CD8-positive, alpha-beta T cell (primary cell): ENCODE measurements at regions of chr22 and their contacts with region 1.

Region 1: GRCh38 chr22:26364066-26365015 is 64.7 kb upstream of the ASPHD2 start:
- DNase-seq: peak; percentile 1 to 78 (median 50)
- ATAC-seq: peak; percentile 73
- H3K4me3 ChIP-seq: no peak overlapping the region
- H3K4me3 Mint-ChIP-seq: no peak overlapping the region
- H3K27ac ChIP-seq: no peak overlapping the region
- H3K27ac Mint-ChIP-seq: no peak overlapping the region
- H3K4me1 ChIP-seq: peaks cover 7% of the 10 kb centered on the region
- H3K4me1 Mint-ChIP-seq: peaks cover 8% of the 10 kb centered on the region
- H3K27me3 ChIP-seq: peaks cover 0 to 4% of the 10 kb centered on the region in 2 experiments
- H3K27me3 Mint-ChIP-seq: peaks cover 20% of the 10 kb centered on the region
- CTCF ChIP-seq: peak; percentile 58

Region 2: DNA sequence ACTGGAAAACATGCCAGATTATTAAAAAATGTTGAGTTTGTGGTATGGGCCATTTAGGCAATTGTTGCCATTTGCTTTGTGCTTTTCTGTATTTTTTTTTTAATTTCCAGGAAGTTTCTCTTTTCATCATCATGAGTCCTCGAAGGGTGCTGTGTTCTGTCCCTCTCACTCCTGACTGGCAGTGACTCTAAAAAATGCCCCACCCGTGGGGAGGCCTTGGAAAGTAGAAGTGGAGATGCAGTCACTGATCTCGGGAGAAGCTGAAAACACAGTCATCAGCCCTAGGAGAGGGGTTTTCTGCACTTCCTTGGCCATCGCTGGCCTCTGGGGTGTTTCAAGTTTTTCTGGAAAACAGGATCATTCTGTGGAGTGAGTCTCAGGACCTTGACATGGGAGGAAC is 898.4 kb before region 1 on chr22:
- CTCF ChIA-PET with region 1: interaction called, 3 read pairs
- POLR2A ChIA-PET with region 1: no interaction called
- intact Hi-C with region 1: loop called in 1 of 2 experiments (anchors 1 kb)
- DNase-seq: no peak
- ATAC-seq: no peak
- H3K4me3 ChIP-seq: no peak overlapping the region
- H3K4me3 Mint-ChIP-seq: no peak overlapping the region
- H3K27ac ChIP-seq: no peak overlapping the region
- H3K27ac Mint-ChIP-seq: no peak overlapping the region
- H3K4me1 ChIP-seq: no peaks in the 10 kb centered on the region
- H3K4me1 Mint-ChIP-seq: peaks cover 2% of the 10 kb centered on the region
- H3K27me3 ChIP-seq: no peaks in the 10 kb centered on the region
- H3K27me3 Mint-ChIP-seq: no peaks in the 10 kb centered on the region
- CTCF ChIP-seq: no peak

Region 3: GRCh38 chr22:26391623-26392022 is 27.3 kb after region 1 on chr22:
- CTCF ChIA-PET with region 1: interaction called, 14 read pairs
- POLR2A ChIA-PET with region 1: no interaction called
- intact Hi-C with region 1: no loop called
- DNase-seq: no peak
- ATAC-seq: no peak
- H3K4me3 ChIP-seq: no peak overlapping the region
- H3K4me3 Mint-ChIP-seq: no peak overlapping the region
- H3K27ac ChIP-seq: no peak overlapping the region
- H3K27ac Mint-ChIP-seq: no peak overlapping the region
- H3K4me1 ChIP-seq: no peaks in the 10 kb centered on the region
- H3K4me1 Mint-ChIP-seq: no peaks in the 10 kb centered on the region
- H3K27me3 ChIP-seq: no peaks in the 10 kb centered on the region
- H3K27me3 Mint-ChIP-seq: peaks cover 18% of the 10 kb centered on the region
- CTCF ChIP-seq: no peak

Region 4: GRCh38 chr22:26656891-26657851 is 292.8 kb after region 1 on chr22 and contains the start of gene MIAT:
- CTCF ChIA-PET with region 1: no interaction called
- POLR2A ChIA-PET with region 1: no interaction called
- intact Hi-C with region 1: no loop called
- DNase-seq: peak; percentile 48 to 88 (median 78)
- ATAC-seq: peak; percentile 83
- H3K4me3 ChIP-seq: peak within 1 kb of the TSS; percentile 91 to 96
- H3K4me3 Mint-ChIP-seq: peak within 1 kb of the TSS; percentile 91
- H3K27ac ChIP-seq: peak within 1 kb of the TSS; percentile 38 to 57
- H3K27ac Mint-ChIP-seq: peak within 1 kb of the TSS; percentile 91
- H3K4me1 ChIP-seq: peaks cover 20% of the 10 kb centered on the region
- H3K4me1 Mint-ChIP-seq: peaks cover 28% of the 10 kb centered on the region
- H3K27me3 ChIP-seq: no peaks in the 10 kb centered on the region
- H3K27me3 Mint-ChIP-seq: no peaks in the 10 kb centered on the region
- CTCF ChIP-seq: no peak
- total RNA-seq, gene MIAT: 80.9 to 81.6 TPM

Region 5: GRCh38 chr22:27786291-27786932 is 1422.1 kb after region 1 on chr22:
- CTCF ChIA-PET with region 1: no interaction called
- POLR2A ChIA-PET with region 1: no interaction called
- intact Hi-C with region 1: loop called in 1 of 2 experiments (anchors 5 kb)
- DNase-seq: no peak
- ATAC-seq: no peak
- H3K4me3 ChIP-seq: no peak overlapping the region
- H3K4me3 Mint-ChIP-seq: no peak overlapping the region
- H3K27ac ChIP-seq: no peak overlapping the region
- H3K27ac Mint-ChIP-seq: no peak overlapping the region
- H3K4me1 ChIP-seq: no peaks in the 10 kb centered on the region
- H3K4me1 Mint-ChIP-seq: peaks cover 1% of the 10 kb centered on the region
- H3K27me3 ChIP-seq: no peaks in the 10 kb centered on the region
- H3K27me3 Mint-ChIP-seq: peaks cover 27% of the 10 kb centered on the region
- CTCF ChIP-seq: no peak

Region 6: DNA sequence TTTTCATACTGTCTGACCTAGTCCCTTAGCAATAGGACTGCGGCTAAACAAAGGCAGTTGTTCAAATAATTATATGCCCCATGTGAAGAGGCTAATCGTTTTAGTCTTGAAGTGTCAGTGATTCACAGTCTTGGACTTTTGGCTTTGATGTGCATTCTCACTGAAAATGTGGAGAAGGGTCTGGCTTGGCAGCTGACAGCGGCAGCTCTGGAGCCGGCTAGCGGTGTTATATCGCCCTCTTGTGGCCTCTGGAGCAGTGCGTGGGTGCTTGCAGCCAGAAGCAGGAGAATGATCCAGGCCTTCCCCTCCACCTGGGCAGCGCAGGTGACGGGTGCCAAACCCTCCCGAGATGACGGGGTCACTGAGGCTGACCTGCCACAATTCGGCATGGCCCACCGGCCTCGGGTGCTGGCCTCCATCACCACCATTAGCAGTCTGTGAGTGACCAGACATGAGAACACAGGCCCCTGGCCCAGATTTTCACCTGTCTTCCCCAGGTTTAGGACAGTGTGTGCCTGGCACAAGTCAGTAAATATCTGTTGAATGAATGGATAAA is 1645.0 kb after region 1 on chr22:
- CTCF ChIA-PET with region 1: no interaction called
- POLR2A ChIA-PET with region 1: no interaction called
- intact Hi-C with region 1: loop called in 1 of 2 experiments (anchors 10 kb)
- DNase-seq: peak; percentile 46 to 81 (median 71)
- ATAC-seq: peak; percentile 71
- H3K4me3 ChIP-seq: no peak overlapping the region
- H3K4me3 Mint-ChIP-seq: no peak overlapping the region
- H3K27ac ChIP-seq: no peak overlapping the region
- H3K27ac Mint-ChIP-seq: no peak overlapping the region
- H3K4me1 ChIP-seq: no peaks in the 10 kb centered on the region
- H3K4me1 Mint-ChIP-seq: no peaks in the 10 kb centered on the region
- H3K27me3 ChIP-seq: no peaks in the 10 kb centered on the region
- H3K27me3 Mint-ChIP-seq: no peaks in the 10 kb centered on the region
- CTCF ChIP-seq: peak; percentile 92